Naive thymus-derived CD4-positive, alpha-beta T cell (primary cell): ENCODE measurements at regions of chr4 and their contacts with region 1.

Region 1: DNA sequence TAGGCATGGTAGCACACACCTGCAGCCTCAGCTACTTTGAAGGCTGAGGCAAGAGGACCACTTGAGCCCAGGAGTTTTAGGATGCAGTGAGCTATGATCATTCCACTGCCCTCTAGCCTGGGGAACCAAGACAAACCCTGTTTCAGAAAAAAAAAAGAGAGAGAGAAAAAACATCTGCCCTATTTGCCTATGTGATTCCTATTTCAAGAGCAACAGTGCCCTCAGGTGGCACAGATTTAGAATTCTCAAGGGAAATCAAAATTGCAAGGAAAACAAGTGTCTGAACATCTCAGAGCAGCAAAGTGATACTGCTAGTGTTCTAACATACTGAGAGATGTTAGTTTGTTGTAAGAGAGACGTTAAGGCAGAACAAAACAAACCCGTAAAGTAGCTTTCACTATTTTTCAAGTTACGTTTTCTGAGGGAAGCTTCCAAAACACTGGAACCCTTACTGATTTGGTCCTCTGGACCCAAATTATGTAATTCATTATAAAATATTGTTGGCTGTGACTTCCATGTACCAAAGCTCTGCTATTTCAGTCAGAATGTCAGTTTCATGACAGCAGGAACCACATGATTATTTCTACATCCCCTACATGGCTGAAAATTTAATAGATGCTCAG is 7.9 kb downstream of the BDH2 start:
- DNase-seq: peak in 7 of 9 donors; percentile 36 to 65 (median 50)
- ATAC-seq: peak; percentile 80
- H3K4me3 ChIP-seq: no peak overlapping the region
- H3K4me3 Mint-ChIP-seq: peak overlapping the region in 1 of 10 donors; percentile 78
- H3K27ac ChIP-seq: no peak overlapping the region
- H3K27ac Mint-ChIP-seq: peak overlapping the region in 3 of 9 donors; percentile 2 to 72 (median 41)
- H3K4me1 ChIP-seq: no peaks in the 10 kb centered on the region
- H3K4me1 Mint-ChIP-seq: peaks cover 0 to 26% (median 20%) of the 10 kb centered on the region in 7 donors
- H3K27me3 ChIP-seq: no peaks in the 10 kb centered on the region
- H3K27me3 Mint-ChIP-seq: no peaks in the 10 kb centered on the region

Region 2: DNA sequence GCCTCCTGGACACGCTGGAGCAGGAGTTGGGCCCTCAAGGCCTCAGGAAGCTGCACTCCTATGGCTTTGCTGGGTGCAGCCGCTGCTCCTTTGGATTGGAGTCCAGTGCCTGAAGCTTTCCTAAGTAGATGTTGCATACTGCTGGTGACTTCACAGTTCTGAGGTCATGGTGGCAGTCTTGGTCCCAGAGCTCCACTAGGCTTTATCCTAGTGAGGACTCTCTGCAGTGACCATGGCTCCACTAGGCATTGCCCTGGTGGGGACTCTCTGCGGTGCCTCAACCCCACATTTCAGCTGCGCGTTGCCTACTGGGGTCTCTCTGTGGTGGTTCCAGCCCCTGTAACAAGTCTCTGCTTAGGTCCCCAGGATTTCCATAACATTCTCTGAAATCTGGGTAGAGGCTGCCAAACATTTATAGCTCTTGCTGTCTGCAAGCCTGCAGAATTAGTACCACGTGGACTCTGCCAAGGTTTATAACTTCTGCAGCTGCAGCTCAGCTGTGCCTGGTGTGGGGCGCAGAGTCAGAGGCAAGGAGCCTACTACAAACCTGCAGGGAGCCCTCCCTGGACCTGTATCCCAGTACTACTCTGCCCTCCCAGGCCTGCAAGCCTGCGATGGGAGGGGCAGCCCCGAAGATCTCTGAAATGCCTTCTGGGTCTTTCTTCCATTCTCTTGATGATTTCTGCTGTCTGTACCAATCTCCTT is 636.6 kb before region 1 on chr4:
- CTCF ChIA-PET with region 1: no interaction called
- POLR2A ChIA-PET with region 1: no interaction called
- intact Hi-C with region 1: no loop called
- DNase-seq: no peak
- ATAC-seq: no peak
- H3K4me3 ChIP-seq: no peak overlapping the region
- H3K4me3 Mint-ChIP-seq: no peak overlapping the region
- H3K27ac ChIP-seq: no peak overlapping the region
- H3K27ac Mint-ChIP-seq: no peak overlapping the region
- H3K4me1 ChIP-seq: no peaks in the 10 kb centered on the region
- H3K4me1 Mint-ChIP-seq: peaks cover 0 to 17% (median 3%) of the 10 kb centered on the region in 7 donors
- H3K27me3 ChIP-seq: no peaks in the 10 kb centered on the region
- H3K27me3 Mint-ChIP-seq: peaks cover 0 to 7% (median 3%) of the 10 kb centered on the region in 5 donors

Region 3: GRCh38 chr4:102620697-102621497 is 470.8 kb before region 1 on chr4:
- CTCF ChIA-PET with region 1: no interaction called
- POLR2A ChIA-PET with region 1: no interaction called
- intact Hi-C with region 1: loop called (anchors 1 kb)
- DNase-seq: peak in 2 of 9 donors; percentile 34 to 45
- ATAC-seq: peak; percentile 65
- H3K4me3 ChIP-seq: no peak overlapping the region
- H3K4me3 Mint-ChIP-seq: peak overlapping the region in 3 of 10 donors; percentile 9 to 42 (median 32)
- H3K27ac ChIP-seq: no peak overlapping the region
- H3K27ac Mint-ChIP-seq: peak overlapping the region in 7 of 9 donors; percentile 20 to 85 (median 59)
- H3K4me1 ChIP-seq: peaks cover 7 to 18% of the 10 kb centered on the region in 2 donors
- H3K4me1 Mint-ChIP-seq: peaks cover 15 to 73% (median 46%) of the 10 kb centered on the region in 7 donors
- H3K27me3 ChIP-seq: no peaks in the 10 kb centered on the region
- H3K27me3 Mint-ChIP-seq: no peaks in the 10 kb centered on the region

Region 4: GRCh38 chr4:102878901-102879300 is 212.8 kb before region 1 on chr4:
- CTCF ChIA-PET with region 1: no interaction called
- POLR2A ChIA-PET with region 1: no interaction called
- intact Hi-C with region 1: no loop called
- DNase-seq: no peak
- ATAC-seq: no peak
- H3K4me3 ChIP-seq: no peak overlapping the region
- H3K4me3 Mint-ChIP-seq: no peak overlapping the region
- H3K27ac ChIP-seq: no peak overlapping the region
- H3K27ac Mint-ChIP-seq: peak overlapping the region in 1 of 9 donors; percentile 32
- H3K4me1 ChIP-seq: no peaks in the 10 kb centered on the region
- H3K4me1 Mint-ChIP-seq: peaks cover 5 to 24% (median 22%) of the 10 kb centered on the region in 7 donors
- H3K27me3 ChIP-seq: no peaks in the 10 kb centered on the region
- H3K27me3 Mint-ChIP-seq: no peaks in the 10 kb centered on the region

Region 5: GRCh38 chr4:103046416-103047290 is 45.1 kb before region 1 on chr4:
- CTCF ChIA-PET with region 1: interaction called, 26 read pairs
- POLR2A ChIA-PET with region 1: interaction called, 3 read pairs
- intact Hi-C with region 1: loop called (anchors 1 kb)
- DNase-seq: peak in 7 of 9 donors; percentile 18 to 65 (median 53)
- ATAC-seq: peak; percentile 98
- H3K4me3 ChIP-seq: no peak overlapping the region
- H3K4me3 Mint-ChIP-seq: no peak overlapping the region
- H3K27ac ChIP-seq: no peak overlapping the region
- H3K27ac Mint-ChIP-seq: peak overlapping the region in 1 of 9 donors; percentile 22
- H3K4me1 ChIP-seq: no peaks in the 10 kb centered on the region
- H3K4me1 Mint-ChIP-seq: peaks cover 0 to 13% (median 0%) of the 10 kb centered on the region in 7 donors
- H3K27me3 ChIP-seq: no peaks in the 10 kb centered on the region
- H3K27me3 Mint-ChIP-seq: no peaks in the 10 kb centered on the region

Region 6: GRCh38 chr4:103075901-103076739 is 15.6 kb before region 1 on chr4:
- CTCF ChIA-PET with region 1: interaction called, 12 read pairs
- POLR2A ChIA-PET with region 1: interaction called, 6 read pairs
- intact Hi-C with region 1: no loop called
- DNase-seq: peak; percentile 53 to 75 (median 68)
- ATAC-seq: peak; percentile 83
- H3K4me3 ChIP-seq: peak overlapping the region; percentile 74
- H3K4me3 Mint-ChIP-seq: peak overlapping the region; percentile 77 to 97 (median 95)
- H3K27ac ChIP-seq: peak overlapping the region; percentile 87
- H3K27ac Mint-ChIP-seq: peak overlapping the region; percentile 86 to 99 (median 97)
- H3K4me1 ChIP-seq: peaks cover 10 to 17% of the 10 kb centered on the region in 2 donors
- H3K4me1 Mint-ChIP-seq: peaks cover 23 to 54% (median 47%) of the 10 kb centered on the region in 7 donors
- H3K27me3 ChIP-seq: no peaks in the 10 kb centered on the region
- H3K27me3 Mint-ChIP-seq: no peaks in the 10 kb centered on the region